Psoas muscle (tissue), 8 donors: ENCODE measurements at regions of chr1 and their contacts with region 1.

Region 1: DNA sequence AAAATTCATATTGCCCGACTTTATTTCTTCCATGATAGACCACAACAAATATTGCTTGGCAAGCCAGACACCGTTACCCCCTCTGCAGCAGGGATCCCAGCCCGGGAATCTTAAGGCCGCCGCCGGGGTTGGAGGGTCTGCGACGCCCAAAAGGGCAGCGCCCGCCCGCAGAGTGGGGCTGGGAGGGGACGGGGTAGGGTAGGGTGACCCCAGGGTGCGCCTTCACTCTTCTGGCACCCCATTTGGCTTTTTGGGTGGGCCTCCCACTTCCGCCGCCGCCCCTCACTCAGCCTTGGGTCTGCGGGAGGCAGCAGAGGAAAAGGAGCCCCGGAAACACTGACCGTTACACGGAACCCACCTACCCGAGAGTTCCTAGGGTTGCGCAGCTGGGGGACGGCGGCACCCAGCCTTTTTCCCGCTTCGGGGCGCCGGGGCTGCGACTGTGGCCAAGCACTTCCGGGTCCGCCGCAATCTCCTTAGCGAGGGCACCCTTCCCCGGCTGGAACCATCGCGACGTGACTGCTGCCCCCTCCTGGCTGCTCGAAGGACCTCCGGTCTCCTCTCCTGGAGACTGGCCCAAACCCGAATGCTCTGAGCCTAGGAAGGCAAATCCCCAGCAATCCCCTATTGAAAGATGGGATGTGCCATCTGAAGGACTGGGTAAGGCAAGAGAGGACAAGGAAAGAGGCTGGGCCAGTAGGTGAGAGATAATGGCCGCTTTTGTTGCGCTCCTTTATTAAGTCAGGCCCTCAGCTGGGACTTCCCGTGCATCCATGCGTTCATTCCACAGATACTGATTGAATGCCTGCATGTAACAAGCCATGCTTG is at the start of gene PIGC:
- DNase-seq: peak; percentile 90 to 96
- ATAC-seq: peak; percentile 93 to 99 (median 96)
- H3K4me3 ChIP-seq: peak within 1 kb of the TSS; percentile 99
- H3K27ac ChIP-seq: peak within 1 kb of the TSS; percentile 81
- H3K4me1 ChIP-seq: peaks cover 20% of the 10 kb centered on the region
- H3K27me3 ChIP-seq: no peaks in the 10 kb centered on the region
- CTCF ChIP-seq: peak; percentile 81
- total RNA-seq, gene PIGC: 10.8 to 13.8 (median 12.7) TPM

Region 2: GRCh38 chr1:171781176-171781875 is 662.5 kb before region 1 on chr1 and contains the start of gene METTL13:
- intact Hi-C with region 1: loop called in 1 of 2 experiments (anchors 10 kb)
- DNase-seq: peak; percentile 99
- ATAC-seq: peak; percentile 98 to 100 (median 99)
- H3K4me3 ChIP-seq: peak within 1 kb of the TSS; percentile 92
- H3K27ac ChIP-seq: peak within 1 kb of the TSS; percentile 91
- H3K4me1 ChIP-seq: peaks cover 26% of the 10 kb centered on the region
- H3K27me3 ChIP-seq: no peaks in the 10 kb centered on the region
- CTCF ChIP-seq: no peak
- total RNA-seq, gene METTL13: 19.0 to 26.8 (median 23.1) TPM

Region 3: GRCh38 chr1:172588296-172589291 is 144.8 kb after region 1 on chr1:
- intact Hi-C with region 1: no loop called
- DNase-seq: no peak
- ATAC-seq: no peak
- H3K4me3 ChIP-seq: no peak overlapping the region
- H3K27ac ChIP-seq: no peak overlapping the region
- H3K4me1 ChIP-seq: no peaks in the 10 kb centered on the region
- H3K27me3 ChIP-seq: no peaks in the 10 kb centered on the region
- CTCF ChIP-seq: no peak